ENCODE measurements at regions of chr7 and their contacts with region 1.

Region 1: DNA sequence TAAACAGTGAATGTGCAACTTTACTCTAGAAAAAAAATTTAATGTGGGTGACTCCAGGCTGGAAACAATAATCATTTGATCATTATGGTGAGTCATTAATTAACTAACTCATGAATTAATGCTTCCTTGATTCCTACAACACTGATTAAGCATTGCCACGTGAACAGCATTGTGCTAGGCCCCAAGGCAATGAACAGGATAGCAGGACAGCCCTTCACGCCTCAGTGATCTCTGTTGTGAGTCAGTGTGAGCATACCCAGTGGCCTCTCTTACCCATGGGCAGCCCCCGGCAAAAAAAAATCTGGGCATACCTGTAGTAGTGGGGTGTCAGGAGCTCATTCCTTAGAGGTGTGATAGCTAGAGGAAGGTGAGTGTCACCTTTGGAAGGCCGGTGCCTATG is 76.0 kb downstream of the DENND2A start:
- DNase-seq: no peak
- H3K4me3 ChIP-seq: no peak overlapping the region
- H3K27ac ChIP-seq: no peak overlapping the region
- H3K4me1 ChIP-seq: peaks cover 0 to 7% of the 10 kb centered on the region in 2 donors
- H3K27me3 ChIP-seq: no peaks in the 10 kb centered on the region
- CTCF ChIP-seq: no peak

Region 2: GRCh38 chr7:140512317-140513000 is 52.2 kb before region 1 on chr7:
- intact Hi-C with region 1: loop called (anchors 5 kb)
- DNase-seq: no peak
- H3K4me3 ChIP-seq: no peak overlapping the region
- H3K27ac ChIP-seq: no peak overlapping the region
- H3K4me1 ChIP-seq: no peaks in the 10 kb centered on the region
- H3K27me3 ChIP-seq: no peaks in the 10 kb centered on the region
- CTCF ChIP-seq: no peak

Region 3: GRCh38 chr7:140609646-140610045 is 45.0 kb after region 1 on chr7:
- intact Hi-C with region 1: no loop called
- DNase-seq: no peak
- H3K4me3 ChIP-seq: no peak overlapping the region
- H3K27ac ChIP-seq: no peak overlapping the region
- H3K4me1 ChIP-seq: no peaks in the 10 kb centered on the region
- H3K27me3 ChIP-seq: no peaks in the 10 kb centered on the region
- CTCF ChIP-seq: no peak

Measured in ascending aorta (tissue), 2 donors.